PC-9 (cell line): ENCODE measurements at regions of chr1 and their contacts with region 1.

Region 1: GRCh38 chr1:100037927-100038659 is 68.3 kb downstream of the SLC35A3 start:
- DNase-seq: peak; percentile 73 to 83
- H3K4me3 ChIP-seq: peak overlapping the region; percentile 90
- H3K27ac ChIP-seq: peak overlapping the region; percentile 84
- H3K4me1 ChIP-seq: peaks cover 33% of the 10 kb centered on the region
- H3K27me3 ChIP-seq: no peaks in the 10 kb centered on the region
- CTCF ChIP-seq: no peak; the same call in 1 of the 2 replicates

Region 2: DNA sequence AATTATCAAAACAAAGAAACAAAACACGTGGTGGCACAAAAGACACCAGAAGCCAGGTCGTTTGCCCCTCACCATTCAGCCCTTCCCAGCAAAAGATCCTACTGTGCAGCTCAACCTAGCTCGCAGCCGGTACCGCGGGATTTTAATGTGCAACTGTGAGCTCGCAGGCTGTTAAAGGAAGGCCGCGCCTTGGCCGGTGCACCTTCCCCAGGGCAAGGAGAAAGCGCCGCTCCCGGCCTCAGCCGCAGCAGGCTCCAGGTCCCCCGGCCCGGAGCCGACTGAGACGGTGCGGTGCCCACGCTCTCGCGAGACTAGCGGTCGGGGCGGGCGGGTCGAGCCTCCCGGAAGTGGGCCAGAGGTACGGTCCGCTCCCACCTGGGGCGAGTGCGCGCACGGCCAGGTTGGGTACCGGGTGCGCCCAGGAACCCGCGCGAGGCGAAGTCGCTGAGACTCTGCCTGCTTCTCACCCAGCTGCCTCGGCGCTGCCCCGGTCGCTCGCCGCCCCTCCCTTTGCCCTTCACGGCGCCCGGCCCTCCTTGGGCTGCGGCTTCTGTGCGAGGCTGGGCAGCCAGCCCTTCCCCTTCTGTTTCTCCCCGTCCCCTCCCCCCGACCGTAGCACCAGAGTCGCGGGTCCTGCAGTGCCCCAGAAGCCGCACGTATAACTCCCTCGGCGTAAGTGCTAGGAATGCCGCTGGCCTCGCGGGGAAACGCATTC is 188.2 kb before region 1 on chr1 and contains the start of gene AGL:
- CTCF ChIA-PET with region 1: no interaction called
- POLR2A ChIA-PET with region 1: interaction called, 4 read pairs
- intact Hi-C with region 1: loop called (anchors 2 kb)
- DNase-seq: peak; percentile 82 to 91
- H3K4me3 ChIP-seq: peak within 1 kb of the TSS; percentile 76
- H3K27ac ChIP-seq: peak within 1 kb of the TSS; percentile 66
- H3K4me1 ChIP-seq: peaks cover 20% of the 10 kb centered on the region
- H3K27me3 ChIP-seq: no peaks in the 10 kb centered on the region
- CTCF ChIP-seq: no peak
- total RNA-seq, gene AGL: 13.2 and 15.7 TPM in 2 replicates

Region 3: GRCh38 chr1:99877568-99877967 is 160.5 kb before region 1 on chr1:
- CTCF ChIA-PET with region 1: no interaction called
- POLR2A ChIA-PET with region 1: interaction called, 12 read pairs
- intact Hi-C with region 1: no loop called
- DNase-seq: no peak
- H3K4me3 ChIP-seq: no peak overlapping the region
- H3K27ac ChIP-seq: no peak overlapping the region
- H3K4me1 ChIP-seq: no peaks in the 10 kb centered on the region
- H3K27me3 ChIP-seq: no peaks in the 10 kb centered on the region
- CTCF ChIP-seq: no peak